Natural killer cell (primary cell): ENCODE measurements at regions of chr19 and their contacts with region 1.

Region 1: GRCh38 chr19:10717356-10718204 is at the start of gene DNM2:
- DNase-seq: peak; percentile 96 to 99
- ATAC-seq: peak; percentile 82 to 94 (median 84)
- H3K4me3 ChIP-seq: peak within 1 kb of the TSS; percentile 76
- H3K4me3 Mint-ChIP-seq: peak within 1 kb of the TSS; percentile 98
- H3K27ac ChIP-seq: peak within 1 kb of the TSS; percentile 68
- H3K27ac Mint-ChIP-seq: peak within 1 kb of the TSS; percentile 92 to 95
- H3K4me1 ChIP-seq: peaks cover 53% of the 10 kb centered on the region
- H3K4me1 Mint-ChIP-seq: peaks cover 24 to 42% of the 10 kb centered on the region in 2 donors
- H3K27me3 ChIP-seq: no peaks in the 10 kb centered on the region
- H3K27me3 Mint-ChIP-seq: no peaks in the 10 kb centered on the region
- CTCF ChIP-seq: peak; percentile 65
- total RNA-seq, gene DNM2: 419 to 491 (median 428) TPM

Region 2: GRCh38 chr19:10730923-10731322 is 13.3 kb after region 1 on chr19:
- intact Hi-C with region 1: loop called (anchors 1 kb)
- DNase-seq: peak in 1 of 2 donors; percentile 36
- ATAC-seq: peak in 2 of 3 donors; percentile 22 to 27
- H3K4me3 ChIP-seq: no peak overlapping the region
- H3K4me3 Mint-ChIP-seq: peak overlapping the region; percentile 84
- H3K27ac ChIP-seq: peak overlapping the region; percentile 76
- H3K27ac Mint-ChIP-seq: peak overlapping the region; percentile 96 to 99
- H3K4me1 ChIP-seq: peaks cover 58% of the 10 kb centered on the region
- H3K4me1 Mint-ChIP-seq: peaks cover 28 to 32% of the 10 kb centered on the region in 2 donors
- H3K27me3 ChIP-seq: no peaks in the 10 kb centered on the region
- H3K27me3 Mint-ChIP-seq: no peaks in the 10 kb centered on the region
- CTCF ChIP-seq: no peak

Region 3: GRCh38 chr19:10758978-10759377 is 41.4 kb after region 1 on chr19:
- intact Hi-C with region 1: loop called (anchors 1 kb)
- DNase-seq: no peak
- ATAC-seq: no peak
- H3K4me3 ChIP-seq: no peak overlapping the region
- H3K4me3 Mint-ChIP-seq: peak overlapping the region; percentile 91
- H3K27ac ChIP-seq: peak overlapping the region; percentile 75
- H3K27ac Mint-ChIP-seq: peak overlapping the region; percentile 97 to 98
- H3K4me1 ChIP-seq: peaks cover 89% of the 10 kb centered on the region
- H3K4me1 Mint-ChIP-seq: peaks cover 75 to 83% of the 10 kb centered on the region in 2 donors
- H3K27me3 ChIP-seq: no peaks in the 10 kb centered on the region
- H3K27me3 Mint-ChIP-seq: no peaks in the 10 kb centered on the region
- CTCF ChIP-seq: no peak

Region 4: DNA sequence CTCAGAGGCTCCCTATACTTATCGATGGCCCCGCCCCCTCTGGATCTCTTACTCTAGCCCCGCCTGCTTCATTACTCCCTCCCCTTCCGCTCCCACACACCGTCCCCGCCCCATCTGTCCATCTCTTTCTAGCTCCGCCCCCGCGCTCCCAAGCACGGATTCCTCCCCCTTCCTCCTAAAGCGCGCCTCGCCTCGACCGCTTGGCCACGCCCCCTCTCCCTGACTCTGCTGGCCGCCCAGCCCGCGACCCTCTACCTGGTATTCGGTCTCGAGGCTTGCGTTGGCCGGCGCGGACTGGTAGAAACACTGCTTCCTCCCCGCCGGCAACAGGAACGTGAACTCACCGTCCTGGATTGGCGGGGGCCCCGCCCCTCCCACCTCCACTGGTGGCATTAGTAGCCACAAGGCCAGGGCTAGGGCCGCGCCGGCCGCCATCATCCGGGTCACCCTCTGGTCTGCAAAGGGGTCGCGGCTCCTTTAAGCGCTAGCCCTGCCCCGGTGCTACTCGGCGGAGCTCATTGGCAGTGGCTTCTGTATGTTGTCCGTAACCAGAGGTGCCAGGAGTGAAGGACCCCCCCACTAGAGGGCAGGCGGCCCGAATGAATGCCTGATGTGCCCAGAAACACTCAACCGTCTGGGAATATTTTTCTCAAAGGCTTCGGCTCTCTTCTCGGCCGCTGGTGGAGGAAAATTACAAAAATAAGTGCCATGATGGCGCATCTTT is 118.3 kb after region 1 on chr19 and contains the start of gene TMED1:
- intact Hi-C with region 1: loop called (anchors 1 kb)
- DNase-seq: peak; percentile 94 to 98
- ATAC-seq: peak; percentile 86 to 95 (median 86)
- H3K4me3 ChIP-seq: peak within 1 kb of the TSS; percentile 65
- H3K4me3 Mint-ChIP-seq: peak within 1 kb of the TSS; percentile 91
- H3K27ac ChIP-seq: peak within 1 kb of the TSS; percentile 94
- H3K27ac Mint-ChIP-seq: peak within 1 kb of the TSS; percentile 98 to 100
- H3K4me1 ChIP-seq: peaks cover 20% of the 10 kb centered on the region
- H3K4me1 Mint-ChIP-seq: peaks cover 14 to 18% of the 10 kb centered on the region in 2 donors
- H3K27me3 ChIP-seq: no peaks in the 10 kb centered on the region
- H3K27me3 Mint-ChIP-seq: no peaks in the 10 kb centered on the region
- CTCF ChIP-seq: no peak
- total RNA-seq, gene TMED1: 20.5 to 27.8 (median 27.4) TPM

Region 5: GRCh38 chr19:10864538-10864899 is 146.9 kb after region 1 on chr19:
- intact Hi-C with region 1: loop called (anchors 1 kb)
- DNase-seq: peak; percentile 75 to 90
- ATAC-seq: peak; percentile 87 to 93 (median 87)
- H3K4me3 ChIP-seq: no peak overlapping the region
- H3K4me3 Mint-ChIP-seq: peak overlapping the region; percentile 5
- H3K27ac ChIP-seq: no peak overlapping the region
- H3K27ac Mint-ChIP-seq: peak overlapping the region in 1 of 2 donors; percentile 68
- H3K4me1 ChIP-seq: peaks cover 18% of the 10 kb centered on the region
- H3K4me1 Mint-ChIP-seq: peaks cover 9 to 10% of the 10 kb centered on the region in 2 donors
- H3K27me3 ChIP-seq: no peaks in the 10 kb centered on the region
- H3K27me3 Mint-ChIP-seq: no peaks in the 10 kb centered on the region
- CTCF ChIP-seq: peak; percentile 90

Region 6: DNA sequence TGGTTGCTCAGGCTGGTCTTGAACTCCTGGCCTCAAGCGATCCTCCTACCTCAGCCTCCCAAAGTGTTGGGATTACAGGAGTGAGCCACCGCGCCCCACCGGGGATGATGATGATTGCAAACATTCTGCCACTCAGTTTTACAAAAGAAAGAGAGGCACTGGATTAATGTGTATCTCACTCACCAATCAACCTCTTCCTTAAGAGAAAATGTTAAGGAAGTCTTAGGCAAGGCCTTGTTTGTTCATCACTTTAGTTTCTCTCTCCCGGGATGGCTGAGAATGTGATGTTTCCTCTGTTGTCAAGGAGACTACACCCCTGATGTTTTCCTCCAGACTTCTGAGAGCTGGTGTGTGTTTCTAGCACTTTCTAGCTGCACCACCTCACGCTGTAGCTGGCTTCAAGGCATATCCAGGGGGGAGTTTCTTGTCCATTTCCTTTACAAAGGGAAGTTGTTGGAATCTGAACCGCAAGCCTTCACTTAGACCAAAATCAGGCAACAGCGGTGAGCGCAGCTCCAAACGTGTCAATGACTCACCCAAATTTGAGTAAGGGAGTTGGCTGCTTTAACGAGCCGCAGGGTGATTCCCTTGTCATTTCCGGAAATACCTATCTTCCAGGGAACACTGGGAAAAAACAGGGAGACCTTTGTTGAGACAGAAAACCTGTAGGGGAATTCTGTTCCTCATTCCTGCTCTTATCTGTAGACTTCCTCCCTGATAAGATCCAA is 374.0 kb after region 1 on chr19:
- intact Hi-C with region 1: no loop called
- DNase-seq: peak; percentile 50 to 86
- ATAC-seq: peak in 1 of 3 donors; percentile 4
- H3K4me3 ChIP-seq: peak overlapping the region; percentile 69
- H3K4me3 Mint-ChIP-seq: peak overlapping the region; percentile 96
- H3K27ac ChIP-seq: peak overlapping the region; percentile 98
- H3K27ac Mint-ChIP-seq: peak overlapping the region; percentile 91 to 97
- H3K4me1 ChIP-seq: peaks cover 71% of the 10 kb centered on the region
- H3K4me1 Mint-ChIP-seq: peaks cover 46 to 57% of the 10 kb centered on the region in 2 donors
- H3K27me3 ChIP-seq: no peaks in the 10 kb centered on the region
- H3K27me3 Mint-ChIP-seq: no peaks in the 10 kb centered on the region
- CTCF ChIP-seq: no peak